ENCODE measurements at regions of chr2 and their contacts with region 1.

Region 1: DNA sequence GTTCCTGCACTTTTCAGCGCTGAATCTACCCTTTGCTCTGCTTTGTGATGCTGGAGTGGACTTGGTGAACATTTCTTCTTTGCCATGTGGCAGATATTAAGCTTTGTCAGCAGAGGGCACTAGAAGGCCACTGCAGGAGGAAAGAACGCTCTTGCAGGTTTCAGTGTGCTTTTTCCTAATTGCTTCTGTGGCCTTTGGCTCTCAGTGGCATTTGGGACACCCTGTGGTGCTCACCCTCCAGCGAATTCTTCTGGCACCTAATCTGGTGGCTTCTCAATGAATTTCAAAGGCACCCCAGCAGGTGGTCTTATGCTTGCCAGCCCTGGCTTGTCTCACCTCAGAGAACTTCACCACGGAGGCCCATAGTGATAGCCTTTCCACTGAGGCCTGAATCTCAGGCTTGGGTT is 146.7 kb downstream of the MYO3B start:
- DNase-seq: no peak
- ATAC-seq: peak; percentile 89
- H3K4me3 ChIP-seq: no peak overlapping the region
- H3K27ac ChIP-seq: no peak overlapping the region
- H3K4me1 ChIP-seq: no peaks in the 10 kb centered on the region
- H3K27me3 ChIP-seq: no peaks in the 10 kb centered on the region
- CTCF ChIP-seq: peak; percentile 80 to 88 (median 84)
- EP300 ChIP-seq: no peak
- POLR2A ChIP-seq: no peak
- RAD21 ChIP-seq: peak; percentile 97

Region 2: DNA sequence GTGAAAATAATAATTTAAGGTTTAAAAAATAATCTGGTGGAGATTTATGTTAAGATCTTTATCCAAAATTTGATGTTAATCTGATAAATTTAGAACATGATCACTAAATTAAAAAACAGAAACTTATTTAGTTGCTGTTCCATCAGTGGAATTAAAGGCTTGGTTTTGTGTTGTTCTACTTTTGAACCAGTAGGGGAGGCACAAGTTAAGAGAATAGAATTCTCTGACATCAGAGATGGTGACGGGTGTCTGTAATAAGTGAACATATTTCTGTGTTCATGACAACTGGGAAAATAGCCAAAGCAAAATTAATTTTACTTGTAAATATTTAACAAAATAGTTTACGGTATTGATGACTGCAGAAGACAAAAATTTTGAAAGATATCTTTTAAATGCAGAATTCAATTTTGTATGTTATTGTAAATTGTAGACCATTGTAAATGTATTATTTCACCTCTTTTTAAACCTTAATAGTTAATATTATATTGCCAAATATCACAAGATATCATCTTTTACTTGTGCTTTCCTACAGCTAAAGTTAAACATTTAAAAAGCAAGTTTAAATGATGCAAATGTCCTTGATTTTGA is 391.4 kb before region 1 on chr2:
- CTCF ChIA-PET with region 1: interaction called, 26 read pairs
- POLR2A ChIA-PET with region 1: no interaction called
- RAD21 ChIA-PET with region 1: interaction called, 5 read pairs
- SMC1A ChIA-PET with region 1: interaction called, 7 read pairs
- in situ Hi-C with region 1: no loop called
- intact Hi-C with region 1: no loop called
- DNase-seq: no peak
- ATAC-seq: peak; percentile 82
- H3K4me3 ChIP-seq: no peak overlapping the region
- H3K27ac ChIP-seq: no peak overlapping the region
- H3K4me1 ChIP-seq: no peaks in the 10 kb centered on the region
- H3K27me3 ChIP-seq: no peaks in the 10 kb centered on the region
- CTCF ChIP-seq: peak; percentile 67 to 79 (median 70)
- EP300 ChIP-seq: no peak
- POLR2A ChIP-seq: no peak
- RAD21 ChIP-seq: peak; percentile 92

Region 3: GRCh38 chr2:170335351-170335750 is 10.7 kb after region 1 on chr2:
- CTCF ChIA-PET with region 1: interaction called, 23 read pairs
- POLR2A ChIA-PET with region 1: interaction called, 3 read pairs
- RAD21 ChIA-PET with region 1: interaction called, 7 read pairs
- SMC1A ChIA-PET with region 1: interaction called, 11 read pairs
- in situ Hi-C with region 1: no loop called
- intact Hi-C with region 1: no loop called
- DNase-seq: no peak
- ATAC-seq: no peak
- H3K4me3 ChIP-seq: no peak overlapping the region
- H3K27ac ChIP-seq: no peak overlapping the region
- H3K4me1 ChIP-seq: peaks cover 17% of the 10 kb centered on the region
- H3K27me3 ChIP-seq: no peaks in the 10 kb centered on the region
- CTCF ChIP-seq: no peak
- EP300 ChIP-seq: no peak
- POLR2A ChIP-seq: no peak
- RAD21 ChIP-seq: no peak

Region 4: DNA sequence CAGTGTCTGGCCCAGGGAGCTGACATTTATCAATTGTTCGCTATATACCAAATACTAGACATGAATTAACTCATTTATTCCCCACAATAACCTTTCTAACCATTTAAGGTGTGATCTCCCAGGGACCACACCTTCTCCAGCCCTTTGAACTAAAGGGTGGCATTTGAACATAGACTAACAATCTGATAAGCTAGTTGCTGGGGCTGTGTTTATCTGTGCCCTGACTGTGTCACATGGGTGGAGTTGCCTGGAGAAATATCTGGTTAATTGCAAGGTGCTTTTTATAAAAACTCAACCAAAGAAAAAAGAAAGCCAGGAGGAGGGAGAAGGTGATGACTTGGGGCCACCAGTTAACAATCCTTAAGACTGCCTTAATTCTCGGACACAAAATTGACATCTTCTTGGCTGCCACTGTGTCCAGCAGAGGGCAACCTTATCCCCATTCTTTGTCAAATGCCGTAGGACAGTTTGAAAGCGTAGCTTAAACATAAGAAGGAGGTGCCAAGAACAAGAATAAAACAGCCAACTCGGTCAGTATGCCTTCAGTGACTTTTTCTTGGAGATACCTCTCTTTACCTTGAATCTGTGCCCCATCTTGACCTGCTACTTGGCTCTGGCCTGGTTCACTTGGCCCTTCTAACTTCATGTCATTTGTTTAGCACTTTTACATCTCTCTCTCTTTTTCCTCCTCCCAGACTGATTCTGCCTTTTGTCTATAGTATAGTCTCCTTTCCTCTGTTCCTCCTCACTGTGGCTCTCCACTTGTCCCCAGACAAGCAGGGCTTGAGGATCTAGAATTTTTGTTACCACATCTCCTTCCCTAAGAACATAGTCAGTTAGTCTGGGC is 36.7 kb after region 1 on chr2:
- CTCF ChIA-PET with region 1: interaction called, 89 read pairs
- POLR2A ChIA-PET with region 1: no interaction called
- RAD21 ChIA-PET with region 1: interaction called, 19 read pairs
- SMC1A ChIA-PET with region 1: interaction called, 35 read pairs
- in situ Hi-C with region 1: no loop called
- intact Hi-C with region 1: loop called (anchors 2 kb)
- DNase-seq: peak; percentile 26
- ATAC-seq: peak; percentile 97
- H3K4me3 ChIP-seq: no peak overlapping the region
- H3K27ac ChIP-seq: no peak overlapping the region
- H3K4me1 ChIP-seq: no peaks in the 10 kb centered on the region
- H3K27me3 ChIP-seq: no peaks in the 10 kb centered on the region
- CTCF ChIP-seq: peak; percentile 76 to 87 (median 80)
- EP300 ChIP-seq: no peak
- POLR2A ChIP-seq: no peak
- RAD21 ChIP-seq: peak; percentile 65

Region 5: DNA sequence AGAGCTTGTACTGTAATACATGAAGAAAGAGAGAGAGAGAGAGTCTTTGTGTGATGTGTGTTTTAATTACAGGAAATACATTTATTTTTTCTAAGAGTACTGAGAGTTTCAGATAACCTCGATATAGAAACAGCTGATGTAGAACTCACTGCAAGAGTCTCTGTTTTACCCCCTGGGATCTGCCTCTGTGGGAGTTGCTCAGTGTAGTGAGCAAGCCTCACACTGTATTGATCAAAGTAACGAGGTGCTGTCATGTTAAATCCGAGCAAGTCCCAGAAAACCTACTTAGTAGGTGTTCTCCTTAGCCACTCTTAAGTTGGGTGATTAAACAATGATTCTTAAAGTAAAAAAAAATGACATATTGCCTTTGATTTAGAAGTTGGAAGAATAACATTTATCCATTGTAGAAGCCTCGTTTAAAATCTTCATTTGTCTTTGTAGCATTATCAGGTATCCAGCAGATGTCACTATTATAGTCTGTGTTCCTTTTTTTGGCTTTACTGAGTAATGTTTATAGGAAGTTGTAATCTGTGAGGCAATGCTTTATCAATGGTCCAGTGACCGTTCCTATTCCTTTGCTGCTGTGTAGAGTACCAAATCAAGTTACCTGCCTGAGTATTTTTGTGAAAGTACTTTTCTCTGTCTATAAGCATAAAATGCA is 72.3 kb after region 1 on chr2:
- CTCF ChIA-PET with region 1: interaction called, 11 read pairs
- POLR2A ChIA-PET with region 1: no interaction called
- RAD21 ChIA-PET with region 1: interaction called, 4 read pairs
- SMC1A ChIA-PET with region 1: interaction called, 3 read pairs
- in situ Hi-C with region 1: no loop called
- intact Hi-C with region 1: no loop called
- DNase-seq: no peak
- ATAC-seq: peak; percentile 71
- H3K4me3 ChIP-seq: no peak overlapping the region
- H3K27ac ChIP-seq: no peak overlapping the region
- H3K4me1 ChIP-seq: no peaks in the 10 kb centered on the region; the same call in 1 of the 2 replicates
- H3K27me3 ChIP-seq: no peaks in the 10 kb centered on the region
- CTCF ChIP-seq: peak; percentile 27 to 51 (median 46); a peak in 3 of 6 replicates
- EP300 ChIP-seq: no peak
- POLR2A ChIP-seq: no peak
- RAD21 ChIP-seq: peak; percentile 47

Region 6: GRCh38 chr2:170576296-170576695 is 251.7 kb after region 1 on chr2:
- CTCF ChIA-PET with region 1: no interaction called
- POLR2A ChIA-PET with region 1: no interaction called
- RAD21 ChIA-PET with region 1: no interaction called
- SMC1A ChIA-PET with region 1: no interaction called
- in situ Hi-C with region 1: no loop called
- intact Hi-C with region 1: no loop called
- DNase-seq: no peak
- ATAC-seq: no peak
- H3K4me3 ChIP-seq: no peak overlapping the region
- H3K27ac ChIP-seq: no peak overlapping the region
- H3K4me1 ChIP-seq: no peaks in the 10 kb centered on the region
- H3K27me3 ChIP-seq: no peaks in the 10 kb centered on the region
- CTCF ChIP-seq: no peak
- EP300 ChIP-seq: no peak
- POLR2A ChIP-seq: no peak
- RAD21 ChIP-seq: no peak